Posterior vena cava (tissue), 2 donors: ENCODE measurements at regions of chr16 and their contacts with region 1.

Region 1: GRCh38 chr16:71883849-71884638 is at the start of gene ZNF821:
- DNase-seq: peak; percentile 91
- total RNA-seq, gene ZNF821: 5.7 to 6.1 TPM

Region 2: GRCh38 chr16:71961066-71962039 is 77.3 kb after region 1 on chr16:
- intact Hi-C with region 1: loop called in 1 of 2 experiments (anchors 5 kb)
- DNase-seq: peak; percentile 93